Activated naive CD4-positive, alpha-beta T cell treated with anti-CD3 and anti-CD28 coated beads for 36 hours (primary cell): ENCODE measurements at regions of chr11 and their contacts with region 1.

Region 1: DNA sequence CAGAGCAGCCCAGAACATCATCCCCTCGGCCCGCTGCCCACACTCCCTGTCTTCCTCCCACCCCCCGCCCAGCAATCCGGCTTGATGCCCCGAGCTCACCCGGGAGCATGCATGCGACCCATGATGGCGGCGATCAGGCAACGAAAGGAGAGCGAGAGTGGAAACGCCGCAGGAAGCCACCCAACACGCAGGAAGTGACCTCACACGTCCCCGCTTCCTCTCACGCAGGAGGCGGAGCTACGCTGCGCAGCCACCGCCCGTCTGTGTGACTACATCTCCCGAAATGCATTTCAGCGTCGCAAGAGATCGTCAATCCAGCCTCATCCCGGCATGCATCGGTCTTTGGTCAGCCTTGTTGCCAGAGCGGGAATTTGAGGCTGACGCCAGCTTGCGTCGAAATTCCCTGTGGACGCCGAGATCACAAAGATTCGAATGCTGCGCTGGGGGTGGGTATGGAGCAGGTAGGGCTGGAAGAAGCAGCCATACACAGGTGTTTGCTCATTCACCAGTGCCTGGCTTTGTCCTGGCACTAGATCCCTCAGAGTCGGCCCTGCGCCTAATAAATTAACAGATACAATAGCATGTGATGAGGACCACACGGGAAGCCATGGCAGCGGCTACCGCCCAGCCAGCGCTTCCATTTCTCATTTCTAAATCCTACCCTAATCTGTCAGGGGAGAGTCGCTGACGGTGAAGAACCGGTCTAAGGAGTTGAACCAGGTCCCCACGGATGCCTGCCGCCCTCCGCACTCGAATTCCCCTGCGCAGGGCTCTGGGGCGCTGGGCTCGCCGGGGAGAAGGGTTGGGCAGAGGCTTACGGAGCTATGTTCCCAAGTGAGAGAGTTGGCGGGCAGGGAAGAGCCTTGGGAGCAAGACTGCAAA is at the start of gene RPS13:
- DNase-seq: peak; percentile 97
- H3K4me3 Mint-ChIP-seq: peak within 1 kb of the TSS; percentile 93
- H3K27ac Mint-ChIP-seq: peak within 1 kb of the TSS; percentile 97
- H3K4me1 Mint-ChIP-seq: peaks cover 27% of the 10 kb centered on the region
- H3K27me3 Mint-ChIP-seq: no peaks in the 10 kb centered on the region
- total RNA-seq, gene RPS13: 2,045 to 2,099 TPM

Region 2: DNA sequence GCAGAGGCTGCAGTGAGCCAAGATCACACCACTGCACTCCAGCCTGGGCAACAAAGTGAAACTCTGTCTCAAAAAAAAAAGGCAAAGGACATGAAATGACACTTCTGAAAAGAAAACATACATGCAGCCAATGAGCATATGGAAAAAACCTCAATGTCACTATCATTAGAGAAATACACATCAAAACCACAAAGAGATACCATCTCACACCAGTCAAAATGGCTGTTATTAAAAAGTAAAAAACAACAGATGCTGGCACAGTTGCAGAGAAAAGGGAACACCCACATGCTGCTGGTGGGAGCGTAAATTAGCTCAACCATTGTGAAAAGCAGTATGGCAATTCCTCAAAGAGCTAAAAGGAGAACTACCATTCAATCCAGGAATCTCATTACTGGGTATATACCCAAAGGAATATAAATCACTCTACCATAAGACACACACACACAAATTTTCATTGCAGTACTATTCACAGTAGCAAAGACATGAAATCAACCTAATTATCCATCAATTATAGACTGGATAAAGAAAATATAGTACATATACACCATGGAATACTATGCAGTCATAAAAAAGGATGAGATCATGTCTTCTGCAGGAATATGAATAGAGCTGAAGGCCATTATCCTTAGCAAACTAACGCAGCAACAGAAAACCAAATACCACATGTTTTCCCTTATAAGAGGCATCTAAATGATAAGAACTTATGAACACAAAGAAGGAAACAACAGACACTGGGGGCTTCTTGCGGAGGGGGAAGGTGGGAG is 355.0 kb before region 1 on chr11:
- CTCF ChIA-PET with region 1: no interaction called
- intact Hi-C with region 1: no loop called
- DNase-seq: no peak
- H3K4me3 Mint-ChIP-seq: no peak overlapping the region
- H3K27ac Mint-ChIP-seq: no peak overlapping the region
- H3K4me1 Mint-ChIP-seq: no peaks in the 10 kb centered on the region
- H3K27me3 Mint-ChIP-seq: no peaks in the 10 kb centered on the region

Region 3: DNA sequence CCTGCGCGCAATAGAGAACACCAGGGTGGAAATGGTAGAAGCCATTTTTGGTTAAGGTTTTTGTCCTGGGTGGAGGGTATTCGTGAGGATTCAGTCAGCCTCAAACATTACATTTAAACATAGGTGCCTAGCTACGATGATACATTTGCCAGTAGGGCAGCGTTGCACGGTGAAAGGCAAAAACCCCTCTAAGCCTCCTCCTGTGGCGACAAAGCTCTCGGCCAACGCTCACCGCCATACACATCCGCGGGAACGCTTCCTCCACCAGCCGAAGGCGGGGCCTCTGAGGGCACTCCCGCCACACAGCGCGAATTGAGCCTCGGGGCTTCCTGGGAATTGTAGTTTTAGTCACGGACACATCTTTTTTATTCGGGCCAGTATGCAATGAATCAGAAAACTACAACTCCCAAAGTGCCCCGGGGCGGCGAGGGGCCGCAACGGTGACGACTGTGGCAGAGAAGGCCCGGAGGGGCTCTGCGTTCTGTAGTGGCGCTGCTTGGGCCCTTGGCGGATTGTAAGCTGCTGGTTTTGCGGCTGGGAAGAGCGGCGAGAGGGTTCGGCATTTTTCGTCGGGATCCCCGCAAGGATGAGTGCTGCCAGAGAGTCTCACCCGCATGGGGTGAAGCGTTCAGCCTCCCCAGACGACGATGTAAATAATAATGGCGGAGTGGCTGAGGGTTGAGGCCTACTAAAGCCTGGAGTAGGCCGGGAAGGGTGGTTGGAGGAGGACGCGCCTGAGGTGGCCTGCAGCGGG is 339.4 kb before region 1 on chr11 and contains the start of gene C11orf58:
- CTCF ChIA-PET with region 1: no interaction called
- intact Hi-C with region 1: loop called (anchors 1 kb)
- DNase-seq: peak; percentile 97
- H3K4me3 Mint-ChIP-seq: peak within 1 kb of the TSS; percentile 73
- H3K27ac Mint-ChIP-seq: peak within 1 kb of the TSS; percentile 85
- H3K4me1 Mint-ChIP-seq: peaks cover 22% of the 10 kb centered on the region
- H3K27me3 Mint-ChIP-seq: no peaks in the 10 kb centered on the region
- total RNA-seq, gene C11orf58: 114 to 123 TPM

Region 4: DNA sequence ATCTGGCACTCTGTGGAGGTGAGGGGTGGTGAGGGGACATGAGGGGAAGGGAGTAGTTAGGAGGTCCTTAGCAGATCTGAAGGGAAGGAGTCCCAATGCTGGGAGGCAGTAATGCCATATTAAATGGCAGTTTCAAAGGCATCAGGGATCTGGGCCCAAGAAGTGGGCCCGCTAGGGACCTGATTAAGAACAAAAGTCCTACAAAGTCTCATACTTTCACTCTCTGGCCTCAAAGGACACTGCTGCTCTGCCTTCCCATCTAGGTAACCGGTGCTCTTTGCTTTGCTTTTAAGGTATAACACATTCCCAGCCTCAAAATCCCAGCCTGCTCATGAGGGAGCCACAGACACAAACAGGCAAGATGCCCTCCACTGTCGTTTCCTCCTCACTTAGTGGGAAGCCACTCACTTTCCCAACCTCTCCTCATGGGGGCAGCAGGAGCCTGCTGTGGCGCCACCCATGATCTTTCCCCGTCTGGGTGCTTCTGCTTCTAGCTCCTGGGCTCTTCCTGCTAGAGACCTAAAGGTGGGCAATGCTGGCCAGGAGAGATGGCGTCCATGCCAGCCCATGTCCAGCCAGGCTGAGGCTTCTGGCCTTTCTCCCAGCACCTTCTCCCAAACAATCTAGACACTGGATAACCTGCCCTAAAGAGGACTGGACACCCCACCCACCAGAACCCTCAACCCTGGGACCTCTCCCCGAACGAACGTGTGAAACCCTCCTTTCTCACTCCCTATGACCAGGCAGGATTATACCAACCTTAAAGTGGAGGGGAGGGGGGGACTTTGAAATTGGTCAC is 131.9 kb before region 1 on chr11:
- CTCF ChIA-PET with region 1: no interaction called
- intact Hi-C with region 1: loop called (anchors 1 kb)
- DNase-seq: peak; percentile 70
- H3K4me3 Mint-ChIP-seq: no peak overlapping the region
- H3K27ac Mint-ChIP-seq: no peak overlapping the region
- H3K4me1 Mint-ChIP-seq: peaks cover 3% of the 10 kb centered on the region
- H3K27me3 Mint-ChIP-seq: no peaks in the 10 kb centered on the region

Region 5: GRCh38 chr11:17014838-17015626 is 62.7 kb before region 1 on chr11:
- CTCF ChIA-PET with region 1: no interaction called
- intact Hi-C with region 1: loop called (anchors 2 kb)
- DNase-seq: peak; percentile 34
- H3K4me3 Mint-ChIP-seq: peak overlapping the region; percentile 81
- H3K27ac Mint-ChIP-seq: peak overlapping the region; percentile 14
- H3K4me1 Mint-ChIP-seq: peaks cover 3% of the 10 kb centered on the region
- H3K27me3 Mint-ChIP-seq: peaks cover 18% of the 10 kb centered on the region

Region 6: GRCh38 chr11:17276236-17277023 is 198.7 kb after region 1 on chr11 and contains the start of gene NUCB2:
- CTCF ChIA-PET with region 1: interaction called, 6 read pairs
- intact Hi-C with region 1: loop called (anchors 1 kb)
- DNase-seq: peak; percentile 98
- H3K4me3 Mint-ChIP-seq: peak within 1 kb of the TSS; percentile 75
- H3K27ac Mint-ChIP-seq: peak within 1 kb of the TSS; percentile 83
- H3K4me1 Mint-ChIP-seq: peaks cover 33% of the 10 kb centered on the region
- H3K27me3 Mint-ChIP-seq: no peaks in the 10 kb centered on the region
- total RNA-seq, gene NUCB2: 67.7 to 74.0 TPM